Activated naive CD4-positive, alpha-beta T cell treated with anti-CD3 and anti-CD28 coated beads, Interleukin-2, amount 10 ng/mL, durations not matched to agents 7 days and 5 days (primary cell): ENCODE measurements at regions of chr19 and their contacts with region 1.

Region 1: DNA sequence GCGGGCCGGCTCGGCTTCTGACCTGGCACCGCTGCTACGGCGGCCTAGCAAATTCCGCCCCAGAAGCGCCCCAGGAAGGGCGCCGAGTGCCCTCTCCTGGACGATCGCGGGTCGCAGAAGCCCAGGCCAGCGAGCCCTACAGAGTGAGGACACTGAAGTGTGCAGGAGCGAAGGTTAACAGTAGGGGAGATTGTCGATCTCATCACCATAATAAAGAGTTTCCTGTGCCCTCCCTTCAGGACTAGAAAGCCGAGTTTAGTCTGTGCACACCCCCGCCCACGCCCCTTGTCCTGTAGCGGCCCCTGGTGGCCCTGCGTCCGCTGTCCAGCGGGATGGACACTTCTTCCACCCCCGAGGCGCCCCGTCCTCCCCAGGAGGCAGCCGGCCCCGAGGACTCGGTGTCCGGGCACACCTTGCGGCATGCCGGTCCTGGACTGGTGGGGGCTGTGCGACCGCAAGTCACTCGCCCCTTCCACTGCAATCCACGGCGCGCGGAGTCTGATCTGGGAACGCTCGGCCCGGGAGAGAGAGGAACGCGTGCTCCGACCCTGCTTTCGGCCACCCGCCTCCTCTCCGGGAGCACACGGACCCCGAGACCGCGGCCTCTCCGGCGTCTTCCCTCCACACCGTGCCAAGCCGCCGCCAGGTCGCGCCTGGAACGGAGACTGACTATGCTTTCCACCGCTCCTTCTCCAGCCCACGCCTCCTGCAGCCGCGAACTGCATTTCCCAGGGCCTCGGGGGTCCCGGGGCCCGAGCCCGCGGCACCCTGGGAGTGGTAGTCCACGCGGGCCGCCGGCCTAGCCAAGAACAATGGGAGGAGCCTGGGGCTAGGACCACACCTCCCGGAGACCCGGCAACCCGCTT is 769 bp upstream of the KMT2B start:
- DNase-seq: peak; percentile 98
- H3K4me3 Mint-ChIP-seq: peak overlapping the region; percentile 85
- H3K27ac Mint-ChIP-seq: peak overlapping the region; percentile 96
- H3K4me1 Mint-ChIP-seq: peaks cover 63% of the 10 kb centered on the region
- H3K27me3 Mint-ChIP-seq: no peaks in the 10 kb centered on the region

Region 2: DNA sequence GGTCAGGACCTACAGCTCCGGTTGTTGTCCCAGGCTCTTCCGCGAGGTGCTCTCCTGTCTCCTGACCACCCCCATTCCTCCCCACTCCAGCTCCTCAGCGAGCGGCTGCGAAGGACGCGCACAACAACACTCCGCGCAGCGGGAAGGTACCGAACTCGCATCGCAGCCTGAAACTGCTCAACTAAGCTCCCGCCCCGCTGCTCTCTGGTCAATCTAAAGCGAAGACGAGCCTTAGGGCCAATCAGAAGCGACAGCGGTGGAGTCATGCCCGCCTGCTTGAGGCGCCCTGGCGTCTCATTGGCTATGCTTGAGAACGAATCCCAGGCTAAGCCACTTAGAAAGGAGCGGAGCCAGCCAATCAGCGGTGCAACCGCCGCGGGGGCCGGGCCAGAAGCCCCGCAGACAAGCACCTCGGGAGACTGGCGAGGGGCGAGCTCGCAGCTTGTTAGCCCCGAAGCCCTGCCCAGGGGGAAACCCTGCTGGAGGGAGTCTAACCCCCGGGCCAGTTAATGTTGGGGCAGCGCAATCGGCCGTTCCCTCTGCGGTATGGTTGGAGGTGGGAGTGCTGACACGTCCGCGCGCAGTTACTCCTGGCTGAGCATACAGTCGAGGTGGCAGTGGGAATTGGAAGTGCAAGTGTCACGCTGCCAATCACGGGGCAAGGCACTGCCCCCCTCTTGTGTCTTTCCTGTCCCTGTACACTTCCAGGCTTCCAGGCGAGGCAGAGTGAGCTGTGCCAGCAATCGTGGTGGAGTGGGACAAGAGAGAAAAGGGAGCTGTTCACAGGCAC is 14.6 kb before region 1 on chr19:
- CTCF ChIA-PET with region 1: interaction called, 236 read pairs
- DNase-seq: peak; percentile 97
- H3K4me3 Mint-ChIP-seq: peak overlapping the region; percentile 82
- H3K27ac Mint-ChIP-seq: peak overlapping the region; percentile 94
- H3K4me1 Mint-ChIP-seq: peaks cover 18% of the 10 kb centered on the region
- H3K27me3 Mint-ChIP-seq: peaks cover 13% of the 10 kb centered on the region

Region 3: DNA sequence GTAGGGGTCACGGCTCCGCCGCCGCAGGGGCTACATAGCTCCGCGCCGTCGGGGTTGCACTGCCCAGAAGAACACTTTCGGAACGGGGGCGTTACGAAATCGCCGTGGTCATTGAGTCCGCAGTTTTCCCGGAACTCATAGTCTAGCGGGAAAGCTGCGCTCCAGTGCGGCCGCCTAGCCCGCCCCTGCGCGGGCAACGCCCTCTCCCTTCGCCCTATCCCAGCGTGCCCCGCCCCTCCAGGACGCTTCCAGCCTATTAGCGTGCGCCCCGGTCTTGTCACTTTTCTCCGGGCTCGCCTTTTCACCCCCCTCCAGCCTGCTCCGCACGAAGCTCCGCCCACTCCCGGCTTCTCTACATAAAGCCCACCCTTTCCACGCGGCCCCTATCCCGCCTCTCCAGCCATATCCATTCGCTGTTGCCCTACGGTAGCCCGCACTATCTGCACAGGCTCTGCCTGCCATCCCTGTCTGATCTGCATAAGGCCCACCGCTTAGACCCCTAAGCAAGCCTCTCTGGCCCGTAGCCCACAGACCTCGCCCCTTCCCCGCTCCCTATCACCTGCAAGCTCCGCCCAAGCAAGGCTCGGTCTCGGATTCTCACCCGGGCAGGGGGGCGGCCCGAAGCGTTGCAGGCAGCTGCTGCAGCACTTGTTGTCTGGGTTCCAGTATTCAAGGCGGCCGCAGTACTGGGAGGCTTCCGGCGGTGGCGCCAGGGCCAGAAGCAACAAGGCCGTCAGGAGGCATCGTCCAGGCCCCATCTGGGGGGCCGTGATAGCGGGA is 23.6 kb after region 1 on chr19:
- CTCF ChIA-PET with region 1: interaction called, 10 read pairs
- DNase-seq: peak; percentile 99
- H3K4me3 Mint-ChIP-seq: peak overlapping the region; percentile 90
- H3K27ac Mint-ChIP-seq: peak overlapping the region; percentile 99
- H3K4me1 Mint-ChIP-seq: peaks cover 57% of the 10 kb centered on the region
- H3K27me3 Mint-ChIP-seq: no peaks in the 10 kb centered on the region

Region 4: DNA sequence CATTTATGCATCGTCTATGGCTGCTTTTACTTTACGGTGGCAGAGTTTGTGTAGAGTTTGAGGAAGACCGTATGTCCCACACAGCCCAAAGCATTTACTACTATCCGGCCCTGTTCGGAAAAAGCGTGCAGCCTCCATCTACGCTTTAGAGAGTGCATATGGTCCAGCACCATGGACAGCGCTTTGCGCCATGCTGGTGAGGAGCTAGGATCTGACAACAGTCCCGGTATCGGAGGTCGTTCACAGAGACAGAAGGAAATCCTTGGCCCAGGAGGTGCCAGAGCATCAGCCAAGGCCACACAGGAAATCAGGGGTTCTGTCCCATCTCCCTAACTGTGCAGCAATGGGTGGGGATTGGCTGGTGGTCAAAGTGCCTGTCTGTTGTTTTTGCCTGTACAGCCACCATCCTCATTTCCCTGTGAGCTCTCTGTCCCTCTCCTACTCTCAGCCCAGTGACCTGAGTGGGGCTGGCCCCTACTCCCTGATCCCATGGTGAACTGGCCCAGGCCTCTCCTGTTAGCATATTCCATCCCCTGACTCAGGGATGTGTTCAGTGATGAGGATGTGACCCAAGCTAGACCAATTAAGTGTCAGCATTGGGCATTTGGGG is 111.8 kb after region 1 on chr19:
- CTCF ChIA-PET with region 1: no interaction called
- DNase-seq: peak; percentile 83
- H3K4me3 Mint-ChIP-seq: no peak overlapping the region
- H3K27ac Mint-ChIP-seq: no peak overlapping the region
- H3K4me1 Mint-ChIP-seq: no peaks in the 10 kb centered on the region
- H3K27me3 Mint-ChIP-seq: peaks cover 30% of the 10 kb centered on the region